ENCODE measurements at regions of chrX and their contacts with region 1.

Region 1: GRCh38 chrX:49915361-49916222 is 6.8 kb upstream of the CLCN5 start:
- DNase-seq: peak; percentile 73
- H3K4me3 ChIP-seq: no peak overlapping the region
- H3K27ac ChIP-seq: no peak overlapping the region
- H3K4me1 ChIP-seq: no peaks in the 10 kb centered on the region
- H3K27me3 ChIP-seq: no peaks in the 10 kb centered on the region
- CTCF ChIP-seq: peak; percentile 91

Region 2: GRCh38 chrX:48003758-48004457 is 1911.7 kb before region 1 on chrX and contains the start of gene ZNF182:
- CTCF ChIA-PET with region 1: no interaction called
- POLR2A ChIA-PET with region 1: no interaction called
- intact Hi-C with region 1: no loop called
- DNase-seq: peak; percentile 94
- H3K4me3 ChIP-seq: peak within 1 kb of the TSS; percentile 59
- H3K27ac ChIP-seq: peak within 1 kb of the TSS; percentile 80
- H3K4me1 ChIP-seq: no peaks in the 10 kb centered on the region
- H3K27me3 ChIP-seq: no peaks in the 10 kb centered on the region
- CTCF ChIP-seq: no peak
- total RNA-seq, gene ZNF182: 6.4 and 6.5 TPM in 2 replicates

Region 3: GRCh38 chrX:49884290-49884862 is 31.2 kb before region 1 on chrX:
- CTCF ChIA-PET with region 1: interaction called, 10 read pairs
- POLR2A ChIA-PET with region 1: no interaction called
- intact Hi-C with region 1: loop called (anchors 5 kb)
- DNase-seq: peak; percentile 74
- H3K4me3 ChIP-seq: no peak overlapping the region
- H3K27ac ChIP-seq: no peak overlapping the region
- H3K4me1 ChIP-seq: no peaks in the 10 kb centered on the region
- H3K27me3 ChIP-seq: no peaks in the 10 kb centered on the region
- CTCF ChIP-seq: peak; percentile 93

Region 4: DNA sequence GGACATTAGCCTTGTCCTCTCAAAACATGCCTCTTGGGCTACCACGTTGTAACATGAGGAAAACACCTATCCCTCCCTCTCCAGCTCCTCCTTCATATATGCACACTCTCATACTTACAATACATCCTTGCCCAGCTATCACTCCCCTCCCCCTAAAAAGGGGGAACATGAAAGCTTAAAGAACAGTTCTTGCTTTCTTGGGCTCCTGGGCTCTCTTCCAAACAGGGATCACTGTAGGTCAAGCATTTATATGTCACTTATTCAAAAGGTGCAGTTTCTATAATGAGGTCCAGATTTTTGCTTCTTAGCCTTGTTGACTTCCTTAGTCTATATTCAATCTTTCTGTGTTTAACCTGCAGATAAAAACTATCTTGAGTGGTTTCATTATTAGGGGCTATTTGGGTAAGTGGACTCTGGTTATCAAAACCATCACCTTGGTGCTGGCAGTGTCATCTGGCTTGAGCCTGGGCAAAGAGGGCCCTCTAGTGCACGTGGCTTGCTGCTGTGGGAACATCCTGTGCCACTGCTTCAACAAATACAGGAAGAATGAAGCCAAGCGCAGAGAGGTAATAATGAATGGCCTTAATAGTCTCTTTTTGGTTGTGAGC is 165.8 kb after region 1 on chrX:
- CTCF ChIA-PET with region 1: no interaction called
- POLR2A ChIA-PET with region 1: no interaction called
- intact Hi-C with region 1: loop called (anchors 10 kb)
- DNase-seq: no peak
- H3K4me3 ChIP-seq: no peak overlapping the region
- H3K27ac ChIP-seq: no peak overlapping the region
- H3K4me1 ChIP-seq: no peaks in the 10 kb centered on the region
- H3K27me3 ChIP-seq: no peaks in the 10 kb centered on the region
- CTCF ChIP-seq: peak; percentile 45

Region 5: GRCh38 chrX:50204364-50204899 is 288.8 kb after region 1 on chrX and contains the start of gene CCNB3:
- CTCF ChIA-PET with region 1: no interaction called
- POLR2A ChIA-PET with region 1: no interaction called
- intact Hi-C with region 1: loop called (anchors 5 kb)
- DNase-seq: peak; percentile 82
- H3K4me3 ChIP-seq: peak within 1 kb of the TSS; percentile 30
- H3K27ac ChIP-seq: peak within 1 kb of the TSS; percentile 75
- H3K4me1 ChIP-seq: peaks cover 4% of the 10 kb centered on the region
- H3K27me3 ChIP-seq: no peaks in the 10 kb centered on the region
- CTCF ChIP-seq: peak; percentile 72
- total RNA-seq, gene CCNB3: 2.0 and 2.6 TPM in 2 replicates

Region 6: GRCh38 chrX:50579955-50580354 is 664.4 kb after region 1 on chrX:
- CTCF ChIA-PET with region 1: no interaction called
- POLR2A ChIA-PET with region 1: no interaction called
- intact Hi-C with region 1: loop called (anchors 10 kb)
- DNase-seq: peak; percentile 80
- H3K4me3 ChIP-seq: no peak overlapping the region
- H3K27ac ChIP-seq: no peak overlapping the region
- H3K4me1 ChIP-seq: no peaks in the 10 kb centered on the region
- H3K27me3 ChIP-seq: no peaks in the 10 kb centered on the region
- CTCF ChIP-seq: peak; percentile 75